T-cell (primary cell): ENCODE measurements at regions of chr9 and their contacts with region 1.

Region 1: GRCh38 chr9:130017076-130017475 is 25.9 kb downstream of the FNBP1 start:
- DNase-seq: no peak
- ATAC-seq: no peak
- H3K4me3 ChIP-seq: no peak overlapping the region
- H3K4me3 Mint-ChIP-seq: no peak overlapping the region
- H3K27ac ChIP-seq: peak overlapping the region; percentile 24
- H3K27ac Mint-ChIP-seq: peak overlapping the region; percentile 85
- H3K4me1 ChIP-seq: peaks cover 7 to 46% of the 10 kb centered on the region in 2 experiments
- H3K4me1 Mint-ChIP-seq: peaks cover 63 to 72% (median 67%) of the 10 kb centered on the region in 3 donors
- H3K27me3 ChIP-seq: no peaks in the 10 kb centered on the region
- H3K27me3 Mint-ChIP-seq: no peaks in the 10 kb centered on the region

Region 2: DNA sequence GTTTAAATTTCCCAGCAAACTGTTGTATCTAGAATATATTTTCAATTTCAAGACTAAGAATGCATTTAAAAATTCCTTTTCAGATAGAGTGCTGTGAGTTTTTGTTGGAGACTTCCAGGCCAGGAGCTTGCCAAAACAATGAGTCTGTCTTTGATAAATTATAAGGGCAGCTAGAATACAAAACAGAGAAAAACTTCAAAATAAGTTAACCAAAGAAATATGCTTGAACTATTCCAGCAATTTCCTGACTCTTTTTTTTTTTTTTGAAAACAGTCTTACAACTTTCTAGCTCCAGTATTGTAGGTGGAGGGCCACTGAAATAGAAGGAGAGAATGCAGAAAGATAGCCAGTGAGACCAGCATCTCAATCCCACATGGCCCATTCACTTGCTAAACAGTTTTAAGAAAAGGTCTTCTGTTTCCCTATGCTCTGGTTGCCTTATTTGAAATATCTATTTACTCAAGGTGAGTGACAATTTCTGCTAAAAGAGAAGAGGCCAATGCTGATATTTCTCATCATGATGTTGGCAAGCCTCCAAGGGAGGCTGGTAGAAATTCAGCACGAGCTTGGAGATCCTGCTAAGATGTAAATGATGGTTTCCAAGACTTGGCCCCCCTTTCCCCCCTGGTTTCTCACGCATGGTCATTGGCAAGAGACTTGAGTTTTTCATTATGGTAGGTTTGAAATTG is 78.6 kb before region 1 on chr9:
- CTCF ChIA-PET with region 1: no interaction called
- POLR2A ChIA-PET with region 1: no interaction called
- DNase-seq: peak in 1 of 35 experiments; percentile 39
- ATAC-seq: no peak
- H3K4me3 ChIP-seq: no peak overlapping the region
- H3K4me3 Mint-ChIP-seq: no peak overlapping the region
- H3K27ac ChIP-seq: peak overlapping the region; percentile 8
- H3K27ac Mint-ChIP-seq: peak overlapping the region; percentile 87 to 92
- H3K4me1 ChIP-seq: peaks cover 16 to 37% of the 10 kb centered on the region in 2 experiments
- H3K4me1 Mint-ChIP-seq: peaks cover 45 to 60% (median 60%) of the 10 kb centered on the region in 3 donors
- H3K27me3 ChIP-seq: no peaks in the 10 kb centered on the region
- H3K27me3 Mint-ChIP-seq: no peaks in the 10 kb centered on the region

Region 3: DNA sequence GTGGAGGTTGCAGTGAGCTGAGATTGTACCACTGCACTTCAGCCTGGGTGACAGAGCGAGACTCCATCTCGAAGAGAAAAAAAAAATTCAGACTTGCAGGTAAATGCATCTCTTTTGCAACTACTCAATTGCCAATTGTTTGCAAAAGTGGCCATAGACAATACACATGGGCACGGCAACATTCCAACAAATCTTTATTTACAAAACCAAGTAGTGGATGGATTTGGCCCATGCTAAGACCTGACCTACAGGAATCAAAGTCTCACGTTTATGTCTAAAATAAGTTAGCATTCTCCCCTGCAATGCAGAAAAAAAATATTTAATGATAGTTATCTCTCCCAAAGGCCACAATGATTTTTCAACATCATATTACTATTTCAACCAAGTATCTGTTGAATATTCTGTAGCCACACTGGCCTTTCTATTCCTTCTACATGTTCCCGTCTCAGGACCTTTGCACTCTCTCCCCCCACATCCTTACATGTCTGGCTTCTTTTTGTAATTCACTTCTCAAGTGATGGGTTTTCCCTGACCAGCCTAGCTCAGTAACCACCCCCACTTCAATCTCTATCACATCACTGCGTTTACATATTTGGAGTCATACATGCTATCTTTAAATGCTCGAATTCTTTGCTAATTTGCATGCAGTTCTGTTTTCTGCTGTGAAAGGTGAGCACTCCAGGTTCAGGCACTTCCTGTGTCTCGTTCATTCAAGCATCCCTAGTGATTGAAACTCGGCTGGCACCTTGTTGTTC is 28.3 kb before region 1 on chr9:
- CTCF ChIA-PET with region 1: interaction called, 6 read pairs
- POLR2A ChIA-PET with region 1: interaction called in 1 of 2 experiments, 11 read pairs
- DNase-seq: peak in 12 of 35 experiments; percentile 8 to 68 (median 26)
- ATAC-seq: peak; percentile 54 to 68 (median 64)
- H3K4me3 ChIP-seq: no peak overlapping the region
- H3K4me3 Mint-ChIP-seq: peak overlapping the region; percentile 10 to 55 (median 28)
- H3K27ac ChIP-seq: peak overlapping the region; percentile 79
- H3K27ac Mint-ChIP-seq: peak overlapping the region; percentile 89
- H3K4me1 ChIP-seq: peaks cover 24 to 61% of the 10 kb centered on the region in 2 experiments
- H3K4me1 Mint-ChIP-seq: peaks cover 67 to 80% (median 79%) of the 10 kb centered on the region in 3 donors
- H3K27me3 ChIP-seq: no peaks in the 10 kb centered on the region
- H3K27me3 Mint-ChIP-seq: no peaks in the 10 kb centered on the region

Region 4: GRCh38 chr9:130034570-130034969 is 17.5 kb after region 1 on chr9:
- CTCF ChIA-PET with region 1: interaction called, 3 to 4 read pairs
- POLR2A ChIA-PET with region 1: interaction called in 1 of 2 experiments, 19 read pairs
- DNase-seq: no peak
- ATAC-seq: peak in 3 of 4 experiments; percentile 38 to 47 (median 44)
- H3K4me3 ChIP-seq: no peak overlapping the region
- H3K4me3 Mint-ChIP-seq: peak overlapping the region; percentile 18 to 66 (median 61)
- H3K27ac ChIP-seq: peak overlapping the region; percentile 39
- H3K27ac Mint-ChIP-seq: peak overlapping the region; percentile 86 to 92
- H3K4me1 ChIP-seq: peaks cover 30 to 80% of the 10 kb centered on the region in 2 experiments
- H3K4me1 Mint-ChIP-seq: peaks cover 93 to 95% (median 95%) of the 10 kb centered on the region in 3 donors
- H3K27me3 ChIP-seq: no peaks in the 10 kb centered on the region
- H3K27me3 Mint-ChIP-seq: no peaks in the 10 kb centered on the region

Region 5: GRCh38 chr9:130073373-130073772 is 56.3 kb after region 1 on chr9:
- CTCF ChIA-PET with region 1: no interaction called
- POLR2A ChIA-PET with region 1: no interaction called
- DNase-seq: no peak
- ATAC-seq: no peak
- H3K4me3 ChIP-seq: no peak overlapping the region
- H3K4me3 Mint-ChIP-seq: no peak overlapping the region
- H3K27ac ChIP-seq: no peak overlapping the region
- H3K27ac Mint-ChIP-seq: no peak overlapping the region
- H3K4me1 ChIP-seq: peaks cover 4 to 6% of the 10 kb centered on the region in 2 experiments
- H3K4me1 Mint-ChIP-seq: peaks cover 16 to 32% (median 31%) of the 10 kb centered on the region in 3 donors
- H3K27me3 ChIP-seq: no peaks in the 10 kb centered on the region
- H3K27me3 Mint-ChIP-seq: no peaks in the 10 kb centered on the region

Region 6: DNA sequence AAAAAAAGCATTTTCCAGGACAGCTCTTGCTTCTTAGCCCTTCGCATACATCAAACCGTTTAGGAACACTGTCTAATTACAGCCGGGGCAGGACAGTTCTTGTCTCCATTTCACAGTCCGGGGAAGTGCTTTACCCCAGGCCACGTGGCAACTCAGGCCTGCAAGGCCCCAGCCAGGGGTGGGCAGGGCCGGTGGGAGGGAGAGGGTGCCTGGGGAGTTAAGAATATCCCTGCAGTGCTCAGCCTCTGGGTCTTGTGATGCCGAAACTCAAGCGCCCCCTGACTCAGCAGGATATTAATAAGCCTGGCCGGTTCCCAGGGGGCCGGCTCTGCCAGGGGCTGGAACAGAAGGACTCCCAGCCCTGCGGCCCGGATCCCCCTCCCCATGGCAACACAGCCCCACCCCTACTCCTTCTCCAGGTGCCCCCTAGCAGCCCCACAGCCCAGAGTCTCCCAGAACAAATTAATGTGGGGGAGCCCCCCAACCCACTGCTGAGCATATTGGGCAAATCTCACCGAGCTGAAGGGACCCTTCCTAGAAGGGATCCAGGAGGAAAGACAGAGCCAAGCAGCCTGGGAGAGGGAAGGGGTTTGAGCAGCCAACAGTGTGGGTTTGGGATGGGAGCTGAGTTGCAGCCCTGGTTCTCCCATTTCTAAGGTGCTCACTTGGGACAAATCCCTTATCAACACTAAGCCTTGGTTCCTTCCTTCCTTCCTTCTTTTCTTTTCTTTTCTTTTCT is 1317.7 kb after region 1 on chr9:
- CTCF ChIA-PET with region 1: no interaction called
- POLR2A ChIA-PET with region 1: no interaction called
- DNase-seq: no peak
- ATAC-seq: no peak
- H3K4me3 ChIP-seq: no peak overlapping the region
- H3K4me3 Mint-ChIP-seq: no peak overlapping the region
- H3K27ac ChIP-seq: no peak overlapping the region
- H3K27ac Mint-ChIP-seq: no peak overlapping the region
- H3K4me1 ChIP-seq: peaks cover 0 to 5% of the 10 kb centered on the region in 2 experiments
- H3K4me1 Mint-ChIP-seq: peaks cover 4 to 10% (median 4%) of the 10 kb centered on the region in 3 donors
- H3K27me3 ChIP-seq: no peaks in the 10 kb centered on the region
- H3K27me3 Mint-ChIP-seq: no peaks in the 10 kb centered on the region